ENCODE measurements at regions of chr4 and their contacts with region 1.

Region 1: DNA sequence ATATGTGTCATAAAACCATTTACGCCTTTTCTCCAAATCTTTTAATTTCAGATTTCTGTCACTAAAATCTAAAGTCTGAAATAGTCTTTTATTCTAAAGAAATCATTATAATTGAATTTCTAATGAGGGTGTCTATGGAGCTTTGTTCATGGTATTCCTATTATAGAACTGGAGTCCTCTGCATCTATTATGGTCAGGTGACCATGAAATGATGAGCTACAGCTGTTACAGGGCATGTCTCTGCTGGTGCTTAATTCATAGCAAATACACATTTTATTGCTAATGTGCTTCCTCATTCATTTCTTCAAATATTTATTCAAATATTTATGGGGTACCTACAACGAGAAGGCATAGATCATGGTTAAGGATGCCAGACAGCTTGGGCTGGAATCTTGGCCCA is 126.1 kb downstream of the NAA11 start:
- DNase-seq: no peak
- H3K4me3 ChIP-seq: no peak overlapping the region
- H3K27ac ChIP-seq: no peak overlapping the region
- H3K4me1 ChIP-seq: no peaks in the 10 kb centered on the region
- H3K27me3 ChIP-seq: no peaks in the 10 kb centered on the region
- CTCF ChIP-seq: no peak

Region 2: DNA sequence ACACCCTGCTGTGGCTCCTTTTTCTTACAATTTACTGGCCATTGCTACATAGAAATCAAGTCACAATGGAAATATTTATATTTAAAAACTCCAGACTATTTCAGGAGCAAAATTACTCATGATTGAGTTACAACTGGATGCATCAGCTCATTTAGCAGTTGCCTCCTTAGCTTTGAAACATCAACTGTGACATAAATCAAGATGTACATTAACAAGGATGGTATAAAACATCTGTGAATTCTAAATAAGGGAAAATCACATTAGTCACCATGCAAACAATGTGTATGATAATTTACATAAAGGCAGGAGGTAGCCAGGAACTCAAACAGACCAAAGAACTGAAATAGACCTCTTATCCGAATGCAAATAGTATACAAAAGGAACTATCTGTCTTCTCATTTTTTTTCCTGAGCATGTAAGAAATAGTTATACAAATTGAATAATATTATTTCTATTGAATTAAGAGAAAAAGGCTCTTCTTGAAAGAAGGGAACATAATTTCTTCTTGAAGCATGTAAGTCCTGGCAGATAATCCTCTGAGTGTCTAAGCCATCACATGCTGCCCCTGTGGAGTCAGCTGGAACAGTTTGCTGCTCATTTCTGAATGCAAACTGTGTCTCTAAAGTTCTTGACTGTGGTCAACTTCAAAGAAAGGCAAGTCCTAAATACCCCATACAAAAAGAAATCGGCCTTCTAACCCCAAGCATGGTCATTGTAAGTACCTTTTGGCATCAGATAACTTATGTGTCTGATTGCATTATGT is 25.1 kb before region 1 on chr4:
- CTCF ChIA-PET with region 1: no interaction called
- dilution Hi-C with region 1: no loop called
- in situ Hi-C with region 1: no loop called
- intact Hi-C with region 1: no loop called
- DNase-seq: no peak
- H3K4me3 ChIP-seq: no peak overlapping the region
- H3K27ac ChIP-seq: no peak overlapping the region
- H3K4me1 ChIP-seq: no peaks in the 10 kb centered on the region
- H3K27me3 ChIP-seq: no peaks in the 10 kb centered on the region
- CTCF ChIP-seq: no peak

Region 3: GRCh38 chr4:79257953-79258613 is 58.3 kb after region 1 on chr4:
- CTCF ChIA-PET with region 1: no interaction called
- dilution Hi-C with region 1: no loop called
- in situ Hi-C with region 1: no loop called
- intact Hi-C with region 1: loop called (anchors 2 kb)
- DNase-seq: no peak
- H3K4me3 ChIP-seq: no peak overlapping the region
- H3K27ac ChIP-seq: no peak overlapping the region
- H3K4me1 ChIP-seq: no peaks in the 10 kb centered on the region
- H3K27me3 ChIP-seq: no peaks in the 10 kb centered on the region
- CTCF ChIP-seq: no peak